Activated CD4-positive, alpha-beta memory T cell treated with anti-CD3 and anti-CD28 coated beads for 36 hours (primary cell): ENCODE measurements at regions of chr2 and their contacts with region 1.

Region 1: GRCh38 chr2:27428213-27428977 is at the start of gene NRBP1:
- DNase-seq: peak; percentile 94
- H3K4me3 Mint-ChIP-seq: peak within 1 kb of the TSS; percentile 99
- H3K27ac Mint-ChIP-seq: peak within 1 kb of the TSS; percentile 98
- H3K4me1 Mint-ChIP-seq: peaks cover 35% of the 10 kb centered on the region
- H3K27me3 Mint-ChIP-seq: no peaks in the 10 kb centered on the region
- total RNA-seq, gene NRBP1: 80.8 to 82.7 TPM

Region 2: DNA sequence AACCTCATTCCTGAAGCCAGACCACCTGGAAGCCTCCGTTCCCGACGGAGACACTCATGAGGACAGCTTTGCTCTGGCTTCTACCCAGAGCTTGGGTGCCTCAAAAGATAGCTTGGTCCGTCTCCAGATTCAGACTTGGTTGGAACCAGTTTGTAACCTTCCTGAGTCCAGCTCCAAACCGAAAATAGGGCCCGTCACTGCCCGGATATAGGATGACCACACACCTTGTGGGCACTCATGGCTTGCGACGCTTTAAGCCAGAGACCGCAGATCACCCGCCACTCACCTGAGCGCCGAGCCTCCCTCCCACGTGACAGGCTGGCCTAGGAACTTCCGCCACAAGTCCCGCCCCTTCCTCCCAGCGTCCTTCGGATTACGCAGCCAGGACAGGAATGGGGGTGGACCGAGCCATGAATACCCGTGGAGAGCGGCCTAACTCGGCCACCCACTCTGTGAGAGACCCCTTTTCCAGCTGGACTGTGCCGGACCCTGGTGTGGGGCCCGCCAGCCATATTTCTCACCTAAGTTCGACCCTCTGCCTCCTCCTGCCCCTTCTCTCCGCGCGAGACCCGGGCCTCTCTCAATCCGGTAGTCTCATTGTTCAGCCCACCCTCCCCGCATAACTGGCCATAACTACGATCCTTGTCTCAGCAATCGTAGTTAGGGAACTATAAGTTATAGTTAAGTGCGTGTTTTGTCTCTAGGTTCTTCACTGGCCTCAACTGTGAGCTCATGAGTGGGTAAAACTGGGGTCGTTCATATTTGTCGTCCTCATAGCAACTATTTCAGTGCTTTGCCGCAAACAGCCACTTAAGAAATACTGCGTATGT is 105.4 kb before region 1 on chr2 and contains the start of gene MPV17:
- CTCF ChIA-PET with region 1: no interaction called
- POLR2A ChIA-PET with region 1: no interaction called
- intact Hi-C with region 1: loop called (anchors 1 kb)
- DNase-seq: peak; percentile 94
- H3K4me3 Mint-ChIP-seq: peak within 1 kb of the TSS; percentile 93
- H3K27ac Mint-ChIP-seq: peak within 1 kb of the TSS; percentile 88
- H3K4me1 Mint-ChIP-seq: peaks cover 18% of the 10 kb centered on the region
- H3K27me3 Mint-ChIP-seq: no peaks in the 10 kb centered on the region
- total RNA-seq, gene MPV17: 85.5 to 86.0 TPM

Region 3: GRCh38 chr2:27370026-27370815 is 58.2 kb before region 1 on chr2 and contains the starts of genes EIF2B4 and SNX17:
- CTCF ChIA-PET with region 1: interaction called, 17 read pairs
- POLR2A ChIA-PET with region 1: interaction called, 5 read pairs
- intact Hi-C with region 1: loop called (anchors 1 kb)
- DNase-seq: peak; percentile 100
- H3K4me3 Mint-ChIP-seq: peak within 1 kb of the TSS; percentile 87
- H3K27ac Mint-ChIP-seq: peak within 1 kb of the TSS; percentile 96
- H3K4me1 Mint-ChIP-seq: peaks cover 29% of the 10 kb centered on the region
- H3K27me3 Mint-ChIP-seq: no peaks in the 10 kb centered on the region
- total RNA-seq, gene EIF2B4: 34.6 to 36.5 TPM
- total RNA-seq, gene SNX17: 91.2 to 93.2 TPM

Region 4: DNA sequence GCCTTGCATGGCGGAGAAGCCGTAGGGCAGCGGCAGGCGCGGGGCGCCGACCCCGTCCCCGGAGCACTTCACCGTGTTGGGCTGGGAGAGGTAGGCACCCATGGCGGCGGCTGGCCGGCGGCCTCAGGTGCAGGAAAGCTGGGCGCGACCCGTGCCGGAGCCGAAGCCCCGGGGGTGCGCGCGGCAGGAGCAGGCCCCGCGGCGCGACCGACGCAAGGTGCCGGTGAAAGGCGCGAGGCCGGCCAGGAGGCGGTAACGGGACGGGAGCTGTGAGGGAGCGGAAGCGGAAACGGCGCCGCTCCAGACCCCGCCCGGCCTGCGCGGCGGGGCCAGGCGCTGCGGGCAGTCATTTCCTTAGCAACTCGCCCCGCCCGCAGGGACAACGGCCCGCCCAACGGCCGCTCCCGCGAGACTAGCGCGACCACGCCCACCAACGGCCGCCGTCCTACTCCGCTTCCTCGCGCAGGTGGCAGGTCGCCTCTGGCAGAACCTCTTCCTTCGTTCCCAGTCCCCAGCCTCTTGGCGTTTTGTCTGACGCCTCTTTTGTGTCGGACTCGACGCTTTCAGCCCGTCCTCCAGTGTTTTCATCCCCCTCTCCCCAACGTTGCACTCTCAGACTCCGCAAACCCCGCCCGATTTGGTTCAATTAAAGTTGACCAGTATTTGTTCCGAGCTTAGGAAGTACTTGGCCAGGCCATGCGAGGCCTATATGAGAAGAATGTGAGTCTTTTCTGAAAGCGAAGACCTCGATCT is 18.9 kb before region 1 on chr2 and contains the start of gene PPM1G:
- CTCF ChIA-PET with region 1: interaction called, 46 read pairs
- POLR2A ChIA-PET with region 1: interaction called, 63 read pairs
- intact Hi-C with region 1: loop called (anchors 1 kb)
- DNase-seq: peak; percentile 98
- H3K4me3 Mint-ChIP-seq: peak within 1 kb of the TSS; percentile 88
- H3K27ac Mint-ChIP-seq: peak within 1 kb of the TSS; percentile 87
- H3K4me1 Mint-ChIP-seq: peaks cover 32% of the 10 kb centered on the region
- H3K27me3 Mint-ChIP-seq: no peaks in the 10 kb centered on the region
- total RNA-seq, gene PPM1G: 127 to 132 TPM

Region 5: DNA sequence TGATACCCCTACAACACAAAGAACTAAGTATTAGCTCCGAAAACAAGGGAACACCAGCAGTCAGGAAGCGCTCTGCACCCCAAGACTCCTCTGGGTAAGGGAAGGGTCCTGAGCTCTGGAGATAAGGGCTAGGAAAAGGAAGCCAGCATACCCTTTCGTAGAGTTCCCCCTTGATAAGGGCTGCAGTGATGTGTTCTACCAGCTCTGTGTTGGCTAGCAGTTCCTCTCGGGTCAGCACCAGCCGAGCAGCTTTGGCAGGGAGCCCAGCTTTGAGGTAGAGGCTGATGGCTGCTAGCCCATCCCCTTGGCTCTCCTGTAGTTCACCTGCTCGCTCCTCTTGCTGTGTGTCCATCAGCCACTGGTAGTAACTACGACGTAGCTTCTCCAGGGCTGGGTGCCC is 32.7 kb after region 1 on chr2:
- CTCF ChIA-PET with region 1: no interaction called
- POLR2A ChIA-PET with region 1: no interaction called
- intact Hi-C with region 1: no loop called
- DNase-seq: no peak
- H3K4me3 Mint-ChIP-seq: no peak overlapping the region
- H3K27ac Mint-ChIP-seq: no peak overlapping the region
- H3K4me1 Mint-ChIP-seq: no peaks in the 10 kb centered on the region
- H3K27me3 Mint-ChIP-seq: no peaks in the 10 kb centered on the region

Region 6: GRCh38 chr2:27582695-27583389 is 154.4 kb after region 1 on chr2 and contains the start of gene ZNF512:
- CTCF ChIA-PET with region 1: interaction called, 3 read pairs
- POLR2A ChIA-PET with region 1: no interaction called
- intact Hi-C with region 1: loop called (anchors 2 kb)
- DNase-seq: peak; percentile 91
- H3K4me3 Mint-ChIP-seq: peak within 1 kb of the TSS; percentile 94
- H3K27ac Mint-ChIP-seq: peak within 1 kb of the TSS; percentile 79
- H3K4me1 Mint-ChIP-seq: peaks cover 43% of the 10 kb centered on the region
- H3K27me3 Mint-ChIP-seq: no peaks in the 10 kb centered on the region
- total RNA-seq, gene ZNF512: 27.4 to 30.0 TPM

Region 7: GRCh38 chr2:27638037-27638637 is 209.7 kb after region 1 on chr2:
- CTCF ChIA-PET with region 1: no interaction called
- POLR2A ChIA-PET with region 1: no interaction called
- intact Hi-C with region 1: loop called (anchors 2 kb)
- DNase-seq: no peak
- H3K4me3 Mint-ChIP-seq: peak overlapping the region; percentile 33
- H3K27ac Mint-ChIP-seq: peak overlapping the region; percentile 99
- H3K4me1 Mint-ChIP-seq: peaks cover 35% of the 10 kb centered on the region
- H3K27me3 Mint-ChIP-seq: no peaks in the 10 kb centered on the region